ENCODE measurements at regions of chr13 and their contacts with region 1.

Region 1: GRCh38 chr13:25301347-25302047 is at the start of gene NUP58:
- DNase-seq: peak; percentile 97
- H3K4me3 Mint-ChIP-seq: peak within 1 kb of the TSS; percentile 92
- H3K27ac Mint-ChIP-seq: peak within 1 kb of the TSS; percentile 92
- H3K4me1 Mint-ChIP-seq: peaks cover 33% of the 10 kb centered on the region
- H3K27me3 Mint-ChIP-seq: no peaks in the 10 kb centered on the region
- total RNA-seq, gene NUP58: 99.4 to 101 TPM

Region 2: DNA sequence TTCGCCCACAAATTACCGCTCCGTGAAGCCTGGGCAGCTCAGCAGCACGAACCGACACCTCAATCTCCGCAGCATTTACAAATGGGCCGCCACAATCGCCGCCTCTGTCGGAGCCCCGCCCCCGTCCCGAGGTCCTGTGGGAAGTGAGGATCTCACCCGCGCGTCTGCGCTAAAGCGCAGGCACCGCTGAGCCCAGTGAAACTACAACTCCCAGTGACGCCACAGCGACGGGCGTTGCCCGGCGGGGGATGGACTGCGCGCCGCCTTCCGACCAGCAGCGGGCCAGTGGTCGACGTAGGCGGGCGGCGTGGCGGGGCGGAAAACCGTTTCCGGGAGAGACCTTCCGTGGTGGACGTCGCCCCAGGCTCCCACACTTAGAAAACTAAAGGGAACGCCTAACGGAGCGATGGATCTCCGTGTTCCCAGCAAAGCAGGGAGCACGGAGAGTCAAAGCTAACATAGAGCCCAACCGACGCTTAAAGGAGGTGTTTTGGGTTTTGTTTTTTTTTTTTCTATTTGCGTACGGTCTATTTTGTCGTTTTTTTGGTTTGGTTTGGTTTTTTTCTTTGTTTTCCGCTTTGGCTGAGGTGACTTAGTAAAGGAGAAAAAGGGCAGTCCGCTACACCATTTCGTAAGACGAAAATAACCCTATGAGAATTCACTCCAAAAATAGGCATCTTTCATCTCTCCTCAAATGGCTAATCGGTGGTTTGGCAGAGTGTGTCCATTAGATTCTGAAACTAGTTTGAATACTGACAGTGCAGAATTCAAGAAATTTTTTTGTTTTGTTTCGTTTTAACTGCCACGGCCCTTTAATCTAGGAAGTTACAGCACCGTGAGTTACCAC is 378.5 kb before region 1 on chr13:
- CTCF ChIA-PET with region 1: no interaction called
- POLR2A ChIA-PET with region 1: no interaction called
- intact Hi-C with region 1: loop called (anchors 5 kb)
- DNase-seq: peak; percentile 96
- H3K4me3 Mint-ChIP-seq: peak overlapping the region; percentile 90
- H3K27ac Mint-ChIP-seq: peak overlapping the region; percentile 92
- H3K4me1 Mint-ChIP-seq: peaks cover 18% of the 10 kb centered on the region
- H3K27me3 Mint-ChIP-seq: no peaks in the 10 kb centered on the region

Region 3: GRCh38 chr13:25232937-25233515 is 68.5 kb before region 1 on chr13:
- CTCF ChIA-PET with region 1: no interaction called
- POLR2A ChIA-PET with region 1: no interaction called
- intact Hi-C with region 1: loop called (anchors 5 kb)
- DNase-seq: no peak
- H3K4me3 Mint-ChIP-seq: no peak overlapping the region
- H3K27ac Mint-ChIP-seq: no peak overlapping the region
- H3K4me1 Mint-ChIP-seq: no peaks in the 10 kb centered on the region
- H3K27me3 Mint-ChIP-seq: peaks cover 8% of the 10 kb centered on the region

Region 4: GRCh38 chr13:25267715-25268114 is 33.8 kb before region 1 on chr13:
- CTCF ChIA-PET with region 1: interaction called, 4 read pairs
- POLR2A ChIA-PET with region 1: interaction called, 3 read pairs
- intact Hi-C with region 1: loop called (anchors 5 kb)
- DNase-seq: no peak
- H3K4me3 Mint-ChIP-seq: no peak overlapping the region
- H3K27ac Mint-ChIP-seq: no peak overlapping the region
- H3K4me1 Mint-ChIP-seq: no peaks in the 10 kb centered on the region
- H3K27me3 Mint-ChIP-seq: no peaks in the 10 kb centered on the region

Region 5: GRCh38 chr13:25281193-25281934 is 20.1 kb before region 1 on chr13:
- CTCF ChIA-PET with region 1: interaction called, 8 read pairs
- POLR2A ChIA-PET with region 1: interaction called, 7 read pairs
- intact Hi-C with region 1: loop called (anchors 1 kb)
- DNase-seq: peak; percentile 58
- H3K4me3 Mint-ChIP-seq: peak overlapping the region; percentile 11
- H3K27ac Mint-ChIP-seq: peak overlapping the region; percentile 83
- H3K4me1 Mint-ChIP-seq: peaks cover 86% of the 10 kb centered on the region
- H3K27me3 Mint-ChIP-seq: no peaks in the 10 kb centered on the region

Region 6: DNA sequence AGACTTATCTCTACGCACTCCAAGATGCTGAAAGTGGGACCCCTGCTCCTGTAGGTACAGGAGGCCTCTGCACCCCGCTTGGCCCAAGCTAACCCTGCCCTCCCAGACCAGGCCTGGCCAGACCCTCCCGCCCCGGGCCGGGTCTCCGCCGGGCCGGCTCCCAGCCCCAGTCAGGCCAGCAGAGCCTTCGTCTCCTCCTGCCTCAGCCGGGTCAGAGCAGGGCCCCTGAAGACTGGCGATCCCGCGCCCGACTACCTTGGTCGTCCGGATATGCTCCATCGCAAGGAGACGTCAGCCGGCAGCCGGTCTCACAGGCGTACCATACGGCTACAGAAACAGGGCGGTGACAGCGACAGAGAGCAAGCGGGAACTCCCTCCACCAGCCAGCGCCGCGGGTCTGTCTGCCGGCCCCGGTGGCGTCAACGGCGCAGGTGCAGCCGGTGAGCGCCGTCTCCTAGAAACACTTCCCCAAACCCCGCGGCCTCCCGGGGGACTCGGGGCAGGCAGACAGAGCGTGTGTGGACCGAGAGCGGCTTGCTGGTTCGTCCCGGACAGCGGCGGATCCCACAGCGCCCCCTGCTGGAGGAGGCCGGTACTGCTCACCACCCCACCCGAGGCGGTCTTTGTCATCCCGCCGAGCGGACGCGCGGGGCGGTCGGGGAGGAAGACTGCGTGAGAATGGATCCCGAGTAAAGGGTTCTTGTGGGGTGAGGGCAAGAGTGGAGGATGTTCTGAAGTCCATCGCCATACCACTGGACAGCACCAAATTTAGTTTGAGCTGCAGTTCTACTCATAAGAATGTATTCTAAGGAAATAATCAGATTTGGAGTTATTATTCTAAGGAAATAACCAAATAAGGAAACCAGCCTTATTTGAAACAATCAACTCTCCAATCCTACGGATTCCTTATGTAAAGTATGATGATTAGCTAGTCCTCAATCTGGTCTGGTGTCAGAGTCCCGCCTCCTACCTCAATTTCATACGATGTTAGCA is 14.2 kb before region 1 on chr13 and contains the start of gene MTMR6:
- CTCF ChIA-PET with region 1: interaction called, 8 read pairs
- POLR2A ChIA-PET with region 1: interaction called, 7 read pairs
- intact Hi-C with region 1: loop called (anchors 1 kb)
- DNase-seq: peak; percentile 96
- H3K4me3 Mint-ChIP-seq: peak within 1 kb of the TSS; percentile 93
- H3K27ac Mint-ChIP-seq: peak within 1 kb of the TSS; percentile 86
- H3K4me1 Mint-ChIP-seq: peaks cover 40% of the 10 kb centered on the region
- H3K27me3 Mint-ChIP-seq: no peaks in the 10 kb centered on the region
- total RNA-seq, gene MTMR6: 12.2 to 12.5 TPM

Region 7: DNA sequence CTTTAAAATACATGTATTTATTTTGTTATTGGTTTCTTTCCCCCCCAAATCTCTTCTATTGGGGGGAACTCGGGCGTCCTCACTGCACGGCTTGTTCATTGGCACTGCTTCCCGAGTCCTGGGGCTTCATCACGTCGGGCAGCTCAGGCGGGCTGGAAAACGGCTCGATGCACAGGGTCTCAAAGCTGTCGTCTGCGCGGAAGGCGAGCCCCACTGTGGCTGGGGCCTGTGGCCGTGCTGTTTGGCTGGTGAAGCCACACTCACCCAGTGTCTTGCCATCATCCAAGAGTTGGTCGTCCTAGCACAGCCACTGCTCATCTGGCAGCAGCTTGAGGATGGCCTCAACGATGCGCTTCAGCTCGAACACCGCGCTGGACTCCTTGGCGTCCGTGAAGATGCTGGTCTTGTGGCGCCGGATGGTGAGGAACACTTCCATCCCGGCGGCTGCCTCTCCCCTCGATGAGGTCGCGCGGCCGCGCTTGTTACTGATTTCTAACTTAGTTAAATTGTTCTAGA is 64.3 kb after region 1 on chr13:
- CTCF ChIA-PET with region 1: no interaction called
- POLR2A ChIA-PET with region 1: no interaction called
- intact Hi-C with region 1: no loop called
- DNase-seq: no peak
- H3K4me3 Mint-ChIP-seq: no peak overlapping the region
- H3K27ac Mint-ChIP-seq: no peak overlapping the region
- H3K4me1 Mint-ChIP-seq: no peaks in the 10 kb centered on the region
- H3K27me3 Mint-ChIP-seq: peaks cover 26% of the 10 kb centered on the region